ENCODE measurements at regions of chr7 and their contacts with region 1.

Region 1: DNA sequence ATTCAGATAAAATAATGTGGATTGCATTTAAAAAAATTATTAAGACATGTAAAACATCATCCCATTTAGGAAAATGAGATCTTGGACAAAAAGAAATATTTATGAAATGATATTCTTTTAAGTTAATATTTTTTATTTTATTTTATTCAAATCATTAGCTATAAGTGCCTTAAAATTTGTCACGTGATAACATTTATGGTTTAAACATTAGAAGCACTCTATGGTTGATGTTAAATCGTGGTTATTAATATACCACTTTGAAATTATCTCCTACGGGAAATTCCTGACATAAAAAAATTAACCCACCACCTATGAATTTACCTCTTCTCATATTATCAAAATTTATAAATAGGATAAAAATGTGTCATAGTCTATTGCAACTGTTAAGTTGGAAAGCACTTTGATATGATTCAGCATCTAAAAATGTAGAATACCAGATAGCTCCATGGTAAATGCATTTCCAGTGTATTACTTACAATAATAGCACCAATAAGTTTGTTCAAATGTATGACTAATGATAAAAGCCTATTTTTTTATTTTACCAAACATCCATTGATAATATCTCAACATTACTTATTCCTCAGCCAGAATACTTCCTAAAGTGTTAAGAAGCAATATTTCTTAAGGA is 13.7 kb upstream of the KCND2 start:
- DNase-seq: no peak
- ATAC-seq: no peak
- H3K4me3 ChIP-seq: no peak overlapping the region
- H3K27ac ChIP-seq: no peak overlapping the region
- H3K4me1 ChIP-seq: no peaks in the 10 kb centered on the region
- H3K27me3 ChIP-seq: no peaks in the 10 kb centered on the region
- CTCF ChIP-seq: no peak
- POLR2A ChIP-seq: no peak
- RAD21 ChIP-seq: no peak

Region 2: DNA sequence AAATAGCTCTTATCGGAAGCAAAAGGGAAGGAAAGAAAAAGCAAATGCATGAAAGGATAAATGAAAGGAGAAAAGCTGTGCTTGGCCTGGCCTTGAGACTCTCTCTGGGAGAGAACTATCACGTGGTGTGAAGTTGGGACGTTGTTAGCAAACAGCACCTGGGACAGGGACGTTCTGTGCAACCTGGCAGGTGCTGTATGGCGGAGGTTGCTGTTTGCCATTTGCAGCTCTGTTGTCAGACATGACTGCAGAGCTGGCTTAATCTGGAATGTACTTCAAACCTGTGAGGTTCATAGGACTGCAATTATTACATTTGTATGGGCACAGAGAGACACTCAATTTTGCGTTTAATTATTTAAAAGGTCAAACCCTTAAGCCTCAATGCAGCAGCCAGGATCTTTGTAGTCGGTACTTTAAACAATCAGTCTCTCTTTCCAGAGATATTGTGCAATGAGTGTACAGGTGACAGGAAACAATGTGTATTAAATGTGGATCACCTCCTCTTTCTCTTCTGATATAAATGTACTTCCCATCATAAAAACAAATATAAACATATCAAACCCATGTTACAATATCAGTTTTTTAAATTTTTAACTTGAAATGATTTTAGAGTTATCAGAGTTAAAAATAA is 786.7 kb before region 1 on chr7:
- CTCF ChIA-PET with region 1: no interaction called
- POLR2A ChIA-PET with region 1: no interaction called
- RAD21 ChIA-PET with region 1: no interaction called
- intact Hi-C with region 1: no loop called
- DNase-seq: no peak
- ATAC-seq: peak; percentile 78
- H3K4me3 ChIP-seq: no peak overlapping the region
- H3K27ac ChIP-seq: no peak overlapping the region
- H3K4me1 ChIP-seq: no peaks in the 10 kb centered on the region
- H3K27me3 ChIP-seq: no peaks in the 10 kb centered on the region
- CTCF ChIP-seq: no peak
- POLR2A ChIP-seq: no peak
- RAD21 ChIP-seq: no peak

Region 3: GRCh38 chr7:120207037-120207436 is 52.2 kb before region 1 on chr7:
- CTCF ChIA-PET with region 1: no interaction called
- POLR2A ChIA-PET with region 1: no interaction called
- RAD21 ChIA-PET with region 1: no interaction called
- intact Hi-C with region 1: loop called (anchors 5 kb)
- DNase-seq: no peak
- ATAC-seq: no peak
- H3K4me3 ChIP-seq: no peak overlapping the region
- H3K27ac ChIP-seq: no peak overlapping the region
- H3K4me1 ChIP-seq: no peaks in the 10 kb centered on the region
- H3K27me3 ChIP-seq: no peaks in the 10 kb centered on the region
- CTCF ChIP-seq: no peak
- POLR2A ChIP-seq: no peak
- RAD21 ChIP-seq: no peak